ENCODE measurements at regions of chr7 and their contacts with region 1.

Region 1: DNA sequence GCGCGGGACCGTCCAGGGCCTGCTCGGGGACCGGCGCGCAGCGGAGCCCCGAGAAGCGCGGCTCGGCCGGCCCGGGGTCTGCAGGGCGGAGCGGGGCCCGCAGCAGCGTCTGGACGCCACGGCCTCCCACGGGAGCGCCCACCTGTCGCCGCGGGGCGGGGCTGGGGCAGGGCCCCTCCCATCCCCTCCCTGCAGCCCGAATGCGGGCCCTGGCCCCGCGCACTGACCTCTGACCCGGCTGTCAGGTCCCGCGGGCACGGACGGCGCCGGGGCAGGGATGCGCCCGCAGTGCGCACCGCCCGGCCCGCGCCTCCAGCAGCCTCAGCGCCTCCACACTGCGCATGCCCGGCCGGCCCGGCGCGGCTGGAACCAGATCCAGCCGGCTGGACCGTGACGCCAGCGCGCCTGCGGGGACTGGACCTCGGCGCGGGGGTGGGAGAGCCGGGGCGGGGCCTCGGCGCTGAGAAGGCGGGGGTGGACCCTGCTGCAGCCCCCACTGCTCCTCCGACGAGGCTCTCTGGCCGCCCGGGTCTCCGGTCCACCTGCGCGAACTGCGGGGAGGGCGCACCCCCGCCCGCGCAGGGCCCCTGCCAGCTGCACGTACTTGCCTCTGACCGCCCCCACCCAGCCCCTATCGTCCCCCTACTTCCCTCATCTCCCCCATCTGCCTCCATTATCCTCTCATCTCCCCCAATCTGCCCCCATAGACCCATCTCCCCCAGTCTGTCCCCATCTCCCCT is 16.1 kb upstream of the GPR146 start:
- DNase-seq: peak; percentile 90
- H3K4me3 Mint-ChIP-seq: peak overlapping the region; percentile 75
- H3K27ac Mint-ChIP-seq: peak overlapping the region; percentile 59
- H3K4me1 Mint-ChIP-seq: peaks cover 17% of the 10 kb centered on the region
- H3K27me3 Mint-ChIP-seq: no peaks in the 10 kb centered on the region
- CTCF ChIP-seq: no peak

Region 2: DNA sequence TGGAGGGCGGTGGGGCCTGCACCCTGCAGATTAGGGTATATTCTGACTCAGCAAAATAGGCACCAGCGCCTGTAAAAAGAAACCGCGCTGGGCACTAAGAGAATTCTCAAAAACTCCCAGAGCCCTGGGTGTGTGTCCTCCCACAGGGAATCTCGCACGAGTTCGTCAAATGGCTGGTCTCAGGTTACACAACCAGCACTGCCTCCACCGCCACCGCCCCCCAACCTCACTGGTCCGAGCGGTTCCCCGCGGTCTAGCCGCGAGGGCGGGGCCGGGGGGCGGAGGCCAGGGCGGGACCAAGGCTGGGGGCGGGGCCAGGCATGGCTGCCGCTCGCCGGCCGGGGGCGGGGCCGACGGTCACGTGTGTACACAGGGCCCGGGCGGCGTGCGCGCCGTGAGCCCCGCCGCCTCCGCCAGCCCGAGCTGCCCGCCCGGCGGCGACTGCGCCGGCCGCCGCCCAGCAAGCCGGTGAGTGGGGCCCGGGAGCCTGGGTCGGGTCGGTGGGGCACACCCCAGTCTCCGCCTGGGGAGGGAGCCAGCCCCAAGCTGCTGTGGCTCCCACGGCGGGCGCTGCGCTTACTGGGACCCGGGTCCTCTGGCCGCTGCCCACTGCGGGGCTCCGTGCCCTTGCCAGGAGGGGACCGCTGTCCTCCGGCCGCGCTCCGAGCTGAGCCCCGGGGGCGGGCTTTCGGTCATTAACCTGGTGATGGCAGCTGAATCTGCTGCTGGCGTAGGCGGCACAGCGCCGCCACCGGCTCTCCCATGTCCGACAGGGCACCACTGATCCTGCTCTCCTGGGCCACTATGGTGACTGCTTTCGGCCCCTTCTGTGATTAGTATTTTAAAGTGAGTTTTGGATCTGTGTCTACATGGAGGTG is 16.2 kb after region 1 on chr7 and contains the start of gene GPR146:
- CTCF ChIA-PET with region 1: no interaction called
- POLR2A ChIA-PET with region 1: interaction called, 5 read pairs
- intact Hi-C with region 1: loop called (anchors 2 kb)
- DNase-seq: peak; percentile 96
- H3K4me3 Mint-ChIP-seq: peak within 1 kb of the TSS; percentile 68
- H3K27ac Mint-ChIP-seq: peak within 1 kb of the TSS; percentile 79
- H3K4me1 Mint-ChIP-seq: peaks cover 11% of the 10 kb centered on the region
- H3K27me3 Mint-ChIP-seq: no peaks in the 10 kb centered on the region
- CTCF ChIP-seq: peak; percentile 34
- total RNA-seq, gene GPR146: 0.27 TPM in 1 of 2 replicates, not detected in the other

Region 3: GRCh38 chr7:1210321-1210978 is 182.2 kb after region 1 on chr7:
- CTCF ChIA-PET with region 1: no interaction called
- POLR2A ChIA-PET with region 1: no interaction called
- intact Hi-C with region 1: no loop called
- DNase-seq: peak; percentile 58
- H3K4me3 Mint-ChIP-seq: no peak overlapping the region
- H3K27ac Mint-ChIP-seq: no peak overlapping the region
- H3K4me1 Mint-ChIP-seq: peaks cover 13% of the 10 kb centered on the region
- H3K27me3 Mint-ChIP-seq: peaks cover 63% of the 10 kb centered on the region
- CTCF ChIP-seq: no peak

Region 4: GRCh38 chr7:1234881-1235500 is 206.8 kb after region 1 on chr7:
- CTCF ChIA-PET with region 1: no interaction called
- POLR2A ChIA-PET with region 1: no interaction called
- intact Hi-C with region 1: no loop called
- DNase-seq: no peak
- H3K4me3 Mint-ChIP-seq: no peak overlapping the region
- H3K27ac Mint-ChIP-seq: no peak overlapping the region
- H3K4me1 Mint-ChIP-seq: no peaks in the 10 kb centered on the region
- H3K27me3 Mint-ChIP-seq: peaks cover 72% of the 10 kb centered on the region
- CTCF ChIP-seq: no peak